Activated T-helper 1 cell treated with anti-CD3 and anti-CD28 coated beads, Interleukin-12 subunit alpha, Interleukin-12 subunit beta, Interleukin-2, Interleukin-4 antibody, amounts not matched to agents 30 ng/mL and 10 ng/mL and 1 ng/mL, durations not matched to agents 14 hours and 24 hours and 36 hours (primary cell): ENCODE measurements at regions of chr10 and their contacts with region 1.

Region 1: GRCh38 chr10:43816351-43817321 is 168.0 kb upstream of the ZNF32 start:
- DNase-seq: peak; percentile 74
- H3K4me3 Mint-ChIP-seq: peak overlapping the region; percentile 70
- H3K27ac Mint-ChIP-seq: peak overlapping the region; percentile 69
- H3K4me1 Mint-ChIP-seq: peaks cover 30% of the 10 kb centered on the region
- H3K27me3 Mint-ChIP-seq: peaks cover 32% of the 10 kb centered on the region

Region 2: GRCh38 chr10:43623351-43623750 is 193.3 kb before region 1 on chr10:
- intact Hi-C with region 1: no loop called
- DNase-seq: no peak
- H3K4me3 Mint-ChIP-seq: peak overlapping the region; percentile 56
- H3K27ac Mint-ChIP-seq: no peak overlapping the region
- H3K4me1 Mint-ChIP-seq: peaks cover 14% of the 10 kb centered on the region
- H3K27me3 Mint-ChIP-seq: no peaks in the 10 kb centered on the region

Region 3: GRCh38 chr10:43781480-43782361 is 34.9 kb before region 1 on chr10:
- intact Hi-C with region 1: loop called (anchors 1 kb)
- DNase-seq: no peak
- H3K4me3 Mint-ChIP-seq: no peak overlapping the region
- H3K27ac Mint-ChIP-seq: no peak overlapping the region
- H3K4me1 Mint-ChIP-seq: peaks cover 25% of the 10 kb centered on the region
- H3K27me3 Mint-ChIP-seq: peaks cover 4% of the 10 kb centered on the region